Caco-2 (cell line): ENCODE measurements at regions of chr3 and their contacts with region 1.

Region 1: GRCh38 chr3:103295974-103296570 is 861.3 kb downstream of the ZPLD1 start:
- DNase-seq: peak in 1 of 2 experiments; percentile 21
- H3K4me3 ChIP-seq: no peak overlapping the region
- H3K4me3 Mint-ChIP-seq: no peak overlapping the region
- H3K27ac Mint-ChIP-seq: no peak overlapping the region
- H3K4me1 ChIP-seq: no peaks in the 10 kb centered on the region
- H3K4me1 Mint-ChIP-seq: no peaks in the 10 kb centered on the region
- H3K27me3 ChIP-seq: no peaks in the 10 kb centered on the region
- H3K27me3 Mint-ChIP-seq: no peaks in the 10 kb centered on the region
- CTCF ChIP-seq: peak; percentile 10 to 39

Region 2: GRCh38 chr3:103372031-103372430 is 76.0 kb after region 1 on chr3:
- CTCF ChIA-PET with region 1: no interaction called
- POLR2A ChIA-PET with region 1: no interaction called
- intact Hi-C with region 1: no loop called
- DNase-seq: no peak
- H3K4me3 ChIP-seq: no peak overlapping the region
- H3K4me3 Mint-ChIP-seq: no peak overlapping the region
- H3K27ac Mint-ChIP-seq: no peak overlapping the region
- H3K4me1 ChIP-seq: no peaks in the 10 kb centered on the region
- H3K4me1 Mint-ChIP-seq: no peaks in the 10 kb centered on the region
- H3K27me3 ChIP-seq: no peaks in the 10 kb centered on the region
- H3K27me3 Mint-ChIP-seq: no peaks in the 10 kb centered on the region
- CTCF ChIP-seq: no peak

Region 3: DNA sequence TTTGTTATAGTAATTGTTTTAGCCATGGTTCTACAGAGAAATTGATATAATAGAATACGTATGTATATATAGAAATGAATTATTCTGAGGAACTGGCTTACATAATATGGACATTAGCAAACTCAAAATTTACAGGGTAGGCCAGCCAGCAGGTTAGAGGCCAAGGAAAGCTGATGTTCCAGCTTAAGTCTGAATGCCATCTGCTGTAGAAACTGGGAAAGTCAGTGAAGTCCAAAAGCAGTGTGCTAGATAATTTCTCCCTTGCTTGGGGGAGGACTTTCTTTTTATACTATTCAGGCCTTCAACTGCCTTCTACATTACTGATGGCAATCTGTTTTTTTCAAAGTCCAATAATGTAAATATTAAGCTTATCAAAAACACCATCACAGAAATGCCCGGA is 313.4 kb after region 1 on chr3:
- CTCF ChIA-PET with region 1: no interaction called
- POLR2A ChIA-PET with region 1: no interaction called
- intact Hi-C with region 1: loop called (anchors 5 kb)
- DNase-seq: no peak
- H3K4me3 ChIP-seq: no peak overlapping the region
- H3K4me3 Mint-ChIP-seq: no peak overlapping the region
- H3K27ac Mint-ChIP-seq: no peak overlapping the region
- H3K4me1 ChIP-seq: no peaks in the 10 kb centered on the region
- H3K4me1 Mint-ChIP-seq: no peaks in the 10 kb centered on the region
- H3K27me3 ChIP-seq: no peaks in the 10 kb centered on the region
- H3K27me3 Mint-ChIP-seq: no peaks in the 10 kb centered on the region
- CTCF ChIP-seq: peak in 1 of 2 experiments; percentile 8